HepG2 (cell line): ENCODE measurements at regions of chr11 and their contacts with region 1.

Region 1: GRCh38 chr11:125091247-125091876 is 20.1 kb downstream of the TMEM218 start:
- DNase-seq: peak; percentile 47
- ATAC-seq: peak; percentile 87
- H3K4me3 ChIP-seq: no peak overlapping the region
- H3K27ac ChIP-seq: no peak overlapping the region
- H3K4me1 ChIP-seq: peaks cover 8% of the 10 kb centered on the region
- H3K27me3 ChIP-seq: no peaks in the 10 kb centered on the region
- CTCF ChIP-seq: peak; percentile 78
- EP300 ChIP-seq: no peak
- POLR2A ChIP-seq: no peak
- RAD21 ChIP-seq: peak; percentile 64; the same call in 1 of the 2 replicates

Region 2: DNA sequence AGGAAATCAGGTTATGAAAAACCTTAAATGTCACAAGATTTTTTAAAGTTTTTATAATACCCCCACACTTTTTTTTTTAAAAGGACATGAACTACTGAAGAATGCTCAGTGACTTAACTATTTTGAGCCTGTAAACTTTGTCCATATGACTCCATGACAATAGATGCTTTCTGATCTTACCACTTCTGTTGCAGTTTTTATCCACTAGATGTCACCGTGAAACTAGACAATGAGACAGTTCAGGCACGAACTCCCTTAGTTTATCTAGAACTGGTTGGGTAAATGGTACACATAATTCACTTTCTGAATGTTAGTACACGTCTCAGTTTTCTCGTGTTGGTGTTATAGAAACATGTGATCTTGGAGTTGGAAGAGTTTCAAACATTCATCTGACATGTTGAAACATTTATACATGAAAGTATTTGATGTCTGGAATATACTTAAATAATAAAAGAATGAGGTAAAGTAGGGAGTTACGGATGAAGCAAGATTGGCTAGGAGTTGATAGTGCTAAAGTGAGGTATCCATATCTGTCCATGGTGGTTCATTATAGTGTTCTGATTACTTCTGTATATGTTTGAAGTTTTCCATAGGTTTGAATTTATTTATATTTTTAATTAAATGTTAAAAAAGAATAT is 129.3 kb before region 1 on chr11:
- CTCF ChIA-PET with region 1: no interaction called
- POLR2A ChIA-PET with region 1: no interaction called
- in situ Hi-C with region 1: no loop called
- intact Hi-C with region 1: loop called (anchors 1 kb)
- DNase-seq: peak; percentile 78
- ATAC-seq: peak; percentile 93
- H3K4me3 ChIP-seq: no peak overlapping the region
- H3K27ac ChIP-seq: no peak overlapping the region
- H3K4me1 ChIP-seq: no peaks in the 10 kb centered on the region
- H3K27me3 ChIP-seq: no peaks in the 10 kb centered on the region
- CTCF ChIP-seq: peak; percentile 87
- EP300 ChIP-seq: no peak
- POLR2A ChIP-seq: no peak
- RAD21 ChIP-seq: peak; percentile 67

Region 3: GRCh38 chr11:125111343-125112207 is 20.2 kb after region 1 on chr11 and contains the start of gene TMEM218:
- CTCF ChIA-PET with region 1: interaction called, 7 read pairs
- POLR2A ChIA-PET with region 1: interaction called, 6 read pairs
- in situ Hi-C with region 1: no loop called
- intact Hi-C with region 1: loop called (anchors 1 kb)
- DNase-seq: peak; percentile 98
- ATAC-seq: peak; percentile 98
- H3K4me3 ChIP-seq: peak within 1 kb of the TSS; percentile 72 to 94 (median 84)
- H3K27ac ChIP-seq: peak within 1 kb of the TSS; percentile 79
- H3K4me1 ChIP-seq: peaks cover 14% of the 10 kb centered on the region
- H3K27me3 ChIP-seq: no peaks in the 10 kb centered on the region; a peak in 1 of 5 replicates
- CTCF ChIP-seq: no peak
- EP300 ChIP-seq: no peak
- POLR2A ChIP-seq: peak; percentile 52 to 76; a peak in 3 of 4 replicates
- RAD21 ChIP-seq: no peak
- total RNA-seq, gene TMEM218: 14.0 and 14.2 TPM in 2 replicates

Region 4: GRCh38 chr11:125123947-125124617 is 32.7 kb after region 1 on chr11:
- CTCF ChIA-PET with region 1: interaction called, 9 read pairs
- POLR2A ChIA-PET with region 1: interaction called, 7 read pairs
- in situ Hi-C with region 1: no loop called
- intact Hi-C with region 1: loop called (anchors 1 kb)
- DNase-seq: peak; percentile 73
- ATAC-seq: peak; percentile 99
- H3K4me3 ChIP-seq: peak overlapping the region; percentile 48 to 55 (median 53); a peak in 5 of 6 replicates
- H3K27ac ChIP-seq: no peak overlapping the region
- H3K4me1 ChIP-seq: peaks cover 16% of the 10 kb centered on the region
- H3K27me3 ChIP-seq: peaks cover 2 to 19% of the 10 kb centered on the region in 2 experiments; a peak in 2 of 5 replicates
- CTCF ChIP-seq: peak; percentile 75
- EP300 ChIP-seq: no peak
- POLR2A ChIP-seq: no peak
- RAD21 ChIP-seq: no peak

Region 5: GRCh38 chr11:125141686-125142535 is 50.5 kb after region 1 on chr11:
- CTCF ChIA-PET with region 1: interaction called, 11 read pairs
- POLR2A ChIA-PET with region 1: no interaction called
- in situ Hi-C with region 1: loop called (anchors 5 kb)
- intact Hi-C with region 1: loop called (anchors 1 kb)
- DNase-seq: no peak
- ATAC-seq: peak; percentile 89
- H3K4me3 ChIP-seq: no peak overlapping the region
- H3K27ac ChIP-seq: no peak overlapping the region
- H3K4me1 ChIP-seq: peaks cover 5% of the 10 kb centered on the region; the same call in 1 of the 2 replicates
- H3K27me3 ChIP-seq: peaks cover 4 to 49% of the 10 kb centered on the region in 2 experiments
- CTCF ChIP-seq: peak; percentile 85
- EP300 ChIP-seq: no peak
- POLR2A ChIP-seq: no peak
- RAD21 ChIP-seq: peak; percentile 55; the same call in 1 of the 2 replicates

Region 6: DNA sequence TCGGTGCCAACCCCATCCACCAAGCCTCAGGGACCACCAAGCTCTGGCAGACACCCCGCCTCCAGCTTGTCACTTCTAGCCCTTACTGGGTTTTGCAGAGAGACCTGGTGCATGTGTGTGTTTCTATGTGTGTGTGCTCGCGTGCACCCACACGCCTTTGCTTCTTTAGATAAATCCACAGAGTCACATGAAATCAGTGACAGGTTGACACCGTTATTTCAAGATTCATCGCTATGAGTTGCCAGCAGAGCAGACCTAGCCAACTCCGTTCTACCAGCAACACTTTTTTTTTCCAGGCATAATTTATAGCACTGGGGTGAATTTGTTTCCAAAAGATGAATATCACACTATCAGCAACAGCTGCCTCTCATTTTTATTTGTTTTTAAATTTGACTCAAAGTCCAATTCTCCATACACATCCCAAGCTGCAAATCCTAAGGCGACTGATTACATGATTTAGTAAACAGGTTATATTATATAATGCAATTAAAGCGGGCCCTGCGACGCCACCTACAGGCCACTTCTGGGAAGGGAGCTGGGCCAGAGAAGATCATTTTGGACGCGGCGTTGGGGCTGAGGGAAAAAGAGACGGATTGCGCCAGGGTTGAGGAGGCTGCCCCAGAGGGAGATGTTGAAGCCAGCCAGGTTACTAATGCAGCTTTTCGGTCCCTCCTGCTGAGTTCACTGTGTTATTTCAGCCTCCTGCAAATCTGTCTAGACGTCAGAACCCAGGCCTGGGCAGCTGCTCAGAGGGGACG is 254.2 kb after region 1 on chr11:
- CTCF ChIA-PET with region 1: interaction called, 9 read pairs
- POLR2A ChIA-PET with region 1: no interaction called
- in situ Hi-C with region 1: no loop called
- intact Hi-C with region 1: loop called (anchors 1 kb)
- DNase-seq: peak; percentile 15
- ATAC-seq: peak; percentile 62
- H3K4me3 ChIP-seq: no peak overlapping the region
- H3K27ac ChIP-seq: no peak overlapping the region
- H3K4me1 ChIP-seq: no peaks in the 10 kb centered on the region
- H3K27me3 ChIP-seq: peaks cover 5 to 57% of the 10 kb centered on the region in 2 experiments; a peak in 3 of 5 replicates
- CTCF ChIP-seq: peak; percentile 64
- EP300 ChIP-seq: no peak; a peak in 1 of 4 replicates
- POLR2A ChIP-seq: no peak
- RAD21 ChIP-seq: no peak